Aorta (tissue), 5 donors: ENCODE measurements at regions of chr20 and their contacts with region 1.

Region 1: GRCh38 chr20:49338061-49338460 is 60.2 kb upstream of the ZNFX1 start:
- DNase-seq: no peak
- ATAC-seq: no peak
- H3K4me3 ChIP-seq: no peak overlapping the region
- H3K27ac ChIP-seq: no peak overlapping the region
- H3K4me1 ChIP-seq: no peaks in the 10 kb centered on the region
- H3K27me3 ChIP-seq: no peaks in the 10 kb centered on the region

Region 2: GRCh38 chr20:49484180-49485140 is 146.4 kb after region 1 on chr20:
- intact Hi-C with region 1: loop called (anchors 1 kb)
- DNase-seq: peak; percentile 82 to 93
- ATAC-seq: peak; percentile 84
- H3K4me3 ChIP-seq: peak overlapping the region; percentile 4 to 18
- H3K27ac ChIP-seq: no peak overlapping the region
- H3K4me1 ChIP-seq: no peaks in the 10 kb centered on the region
- H3K27me3 ChIP-seq: no peaks in the 10 kb centered on the region

Region 3: GRCh38 chr20:49534255-49534712 is 196.2 kb after region 1 on chr20:
- intact Hi-C with region 1: loop called (anchors 2 kb)
- DNase-seq: no peak
- ATAC-seq: peak; percentile 76
- H3K4me3 ChIP-seq: no peak overlapping the region
- H3K27ac ChIP-seq: no peak overlapping the region
- H3K4me1 ChIP-seq: peaks cover under 1 to 3% of the 10 kb centered on the region in 2 donors
- H3K27me3 ChIP-seq: no peaks in the 10 kb centered on the region

Region 4: DNA sequence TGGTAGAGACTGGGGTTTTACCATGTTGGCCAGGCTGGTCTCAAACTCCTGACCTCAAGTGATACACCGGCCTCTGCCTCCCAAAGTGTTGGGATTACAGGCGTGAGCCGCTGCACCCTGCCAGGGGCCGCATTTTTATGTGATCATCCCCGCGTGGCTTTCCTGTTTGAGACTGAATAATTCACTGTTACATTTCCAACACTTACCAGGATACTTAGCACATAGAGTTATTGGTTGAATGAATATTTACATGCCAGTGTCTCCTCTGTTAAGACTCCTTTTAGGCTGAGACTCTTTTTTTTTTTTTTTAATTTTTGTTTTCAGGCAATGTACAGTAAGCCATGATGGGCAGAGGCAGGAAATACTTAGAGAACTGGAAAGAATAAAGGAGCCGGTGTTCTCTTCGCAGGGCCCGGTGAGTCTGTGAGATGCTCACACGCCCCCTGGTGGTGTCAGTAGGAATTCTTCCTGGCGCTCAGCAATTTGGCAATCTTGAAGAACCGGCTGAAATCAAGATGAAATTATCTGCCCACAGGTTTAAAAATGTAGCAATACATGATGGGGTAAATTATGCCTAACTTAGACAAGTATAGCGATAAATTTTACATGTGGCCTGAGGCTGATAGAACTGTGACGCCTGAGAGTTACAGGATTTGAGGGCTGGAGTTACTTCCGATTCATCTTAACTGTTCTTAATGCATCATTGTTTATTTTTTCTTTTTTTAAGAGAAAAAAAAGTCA is 590.5 kb after region 1 on chr20:
- intact Hi-C with region 1: loop called in 1 of 2 experiments (anchors 10 kb)
- DNase-seq: peak; percentile 85 to 90
- ATAC-seq: peak; percentile 81
- H3K4me3 ChIP-seq: no peak overlapping the region
- H3K27ac ChIP-seq: peak overlapping the region in 1 of 2 donors; percentile 43
- H3K4me1 ChIP-seq: no peaks in the 10 kb centered on the region
- H3K27me3 ChIP-seq: no peaks in the 10 kb centered on the region